ENCODE measurements at regions of chr1 and their contacts with region 1.

Region 1: DNA sequence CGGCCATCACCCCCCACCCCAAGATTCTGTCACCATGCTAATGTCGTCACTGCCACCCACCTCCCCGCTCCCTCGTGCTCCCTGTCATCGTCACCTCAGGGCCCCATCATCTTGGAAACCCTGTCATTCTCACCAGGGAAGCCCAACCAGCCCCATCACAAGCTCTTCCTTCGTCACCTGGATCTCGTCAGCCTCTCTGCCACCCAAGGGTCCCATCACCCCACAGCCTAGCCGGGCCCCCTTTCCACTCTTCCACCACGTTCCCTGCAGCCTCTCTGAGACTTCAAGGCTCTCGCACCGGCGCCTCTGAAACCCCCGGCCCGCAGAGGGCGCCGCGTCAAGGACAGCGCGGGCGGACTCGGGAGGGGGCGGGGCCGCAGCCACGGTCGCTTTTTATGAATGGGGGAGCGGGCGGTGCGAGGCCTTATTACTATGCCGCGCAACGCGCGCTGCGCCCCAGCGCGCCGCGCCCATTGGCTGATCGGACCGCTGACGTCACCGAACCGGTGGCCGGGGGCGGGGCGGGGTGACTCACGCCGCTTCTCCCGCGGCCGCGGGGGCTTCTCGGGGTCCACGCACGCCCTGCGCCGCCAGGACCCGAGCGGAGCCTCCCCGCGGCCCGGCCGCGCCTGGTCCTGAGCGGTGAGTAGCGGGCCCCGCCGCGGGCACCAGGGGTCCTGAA is at the start of gene GPR3:
- DNase-seq: no peak
- H3K4me3 ChIP-seq: peak within 1 kb of the TSS; percentile 71
- CTCF ChIP-seq: peak; percentile 83

Region 2: GRCh38 chr1:27306892-27307761 is 85.1 kb before region 1 on chr1:
- CTCF ChIA-PET with region 1: interaction called, 671 read pairs
- POLR2A ChIA-PET with region 1: interaction called, 17 read pairs
- DNase-seq: no peak
- H3K4me3 ChIP-seq: no peak overlapping the region
- CTCF ChIP-seq: peak; percentile 19

Region 3: DNA sequence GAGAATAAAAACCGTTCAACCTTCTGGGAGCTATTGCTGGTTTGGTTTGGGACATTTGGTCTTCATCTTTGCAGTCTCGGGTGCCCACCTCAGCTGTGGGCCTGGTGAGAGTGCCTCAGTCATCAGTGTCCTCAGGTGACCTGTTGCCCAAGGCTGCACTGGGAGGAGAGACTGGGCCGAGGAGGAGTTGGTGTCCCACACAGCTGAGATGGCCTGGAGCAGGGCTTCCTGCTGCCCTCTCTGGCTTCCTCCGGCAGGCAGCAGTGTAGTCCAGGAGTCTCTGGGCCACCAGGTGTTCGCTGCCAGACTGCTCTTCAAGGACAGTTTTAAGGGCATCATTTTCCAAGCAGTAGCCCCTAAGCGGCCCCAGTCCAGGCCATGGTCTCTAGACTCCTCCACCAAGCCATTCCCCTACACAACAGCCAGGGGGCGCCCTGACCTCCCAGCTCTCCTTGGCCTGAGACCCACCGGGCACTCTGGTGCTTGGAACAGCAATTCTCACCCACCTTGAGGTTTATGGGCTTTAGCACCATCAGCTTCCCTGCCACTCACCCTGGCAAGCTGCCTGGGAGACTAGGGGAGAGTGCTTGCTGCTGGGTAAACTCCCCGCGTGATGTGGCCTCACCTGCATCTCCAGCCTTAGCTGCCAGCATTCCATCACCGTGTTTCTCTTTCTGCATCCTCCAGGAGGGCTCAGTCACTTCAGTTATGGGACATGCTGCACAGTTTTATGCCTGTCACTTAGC is 59.5 kb before region 1 on chr1:
- CTCF ChIA-PET with region 1: interaction called, 33 read pairs
- POLR2A ChIA-PET with region 1: no interaction called
- DNase-seq: no peak
- H3K4me3 ChIP-seq: no peak overlapping the region
- CTCF ChIP-seq: peak; percentile 85

Region 4: DNA sequence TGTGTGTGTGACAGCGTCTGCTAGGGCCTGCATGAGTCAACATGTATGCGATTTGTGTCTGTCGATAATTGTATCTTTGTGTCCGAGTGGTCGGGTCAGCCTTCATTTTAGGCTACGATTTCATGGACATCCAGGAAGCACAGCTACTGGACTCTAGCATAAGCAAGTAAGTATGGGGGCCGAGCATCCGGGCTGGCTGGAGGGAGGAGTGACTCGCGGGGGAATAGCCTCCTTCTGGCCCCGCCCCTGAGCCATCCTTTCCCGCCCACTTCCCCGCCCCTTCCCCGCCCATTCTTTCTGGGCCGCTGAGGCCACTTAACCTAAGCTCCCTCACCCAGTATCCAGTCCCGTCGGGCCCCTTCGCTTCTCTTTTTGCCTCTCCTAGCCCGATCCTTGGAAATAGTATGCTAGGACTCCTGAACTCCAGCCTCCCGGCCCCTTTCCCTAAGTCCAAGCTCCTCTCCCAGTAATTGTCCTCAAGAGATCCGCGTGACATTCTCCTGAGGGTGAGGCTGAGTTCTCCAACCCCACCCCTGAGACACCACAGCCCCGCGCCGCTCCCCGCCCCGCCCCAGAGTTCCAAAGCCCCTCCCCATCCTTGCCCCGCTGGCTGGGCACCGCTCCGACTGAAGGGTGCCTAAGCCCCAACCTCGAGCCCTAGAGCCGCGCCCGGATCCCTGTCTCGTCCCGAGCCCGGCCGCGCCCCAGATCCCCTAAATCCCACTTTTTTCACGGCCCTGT is 26.7 kb before region 1 on chr1:
- CTCF ChIA-PET with region 1: interaction called, 47 read pairs
- POLR2A ChIA-PET with region 1: interaction called, 11 read pairs
- DNase-seq: peak; percentile 42
- H3K4me3 ChIP-seq: peak overlapping the region; percentile 63
- CTCF ChIP-seq: no peak

Region 5: GRCh38 chr1:27402349-27402754 is 10.1 kb after region 1 on chr1:
- CTCF ChIA-PET with region 1: interaction called, 35 read pairs
- POLR2A ChIA-PET with region 1: interaction called, 3 read pairs
- DNase-seq: no peak
- H3K4me3 ChIP-seq: no peak overlapping the region
- CTCF ChIP-seq: peak; percentile 81